ENCODE measurements at regions of chr5 and their contacts with region 1.

Region 1: DNA sequence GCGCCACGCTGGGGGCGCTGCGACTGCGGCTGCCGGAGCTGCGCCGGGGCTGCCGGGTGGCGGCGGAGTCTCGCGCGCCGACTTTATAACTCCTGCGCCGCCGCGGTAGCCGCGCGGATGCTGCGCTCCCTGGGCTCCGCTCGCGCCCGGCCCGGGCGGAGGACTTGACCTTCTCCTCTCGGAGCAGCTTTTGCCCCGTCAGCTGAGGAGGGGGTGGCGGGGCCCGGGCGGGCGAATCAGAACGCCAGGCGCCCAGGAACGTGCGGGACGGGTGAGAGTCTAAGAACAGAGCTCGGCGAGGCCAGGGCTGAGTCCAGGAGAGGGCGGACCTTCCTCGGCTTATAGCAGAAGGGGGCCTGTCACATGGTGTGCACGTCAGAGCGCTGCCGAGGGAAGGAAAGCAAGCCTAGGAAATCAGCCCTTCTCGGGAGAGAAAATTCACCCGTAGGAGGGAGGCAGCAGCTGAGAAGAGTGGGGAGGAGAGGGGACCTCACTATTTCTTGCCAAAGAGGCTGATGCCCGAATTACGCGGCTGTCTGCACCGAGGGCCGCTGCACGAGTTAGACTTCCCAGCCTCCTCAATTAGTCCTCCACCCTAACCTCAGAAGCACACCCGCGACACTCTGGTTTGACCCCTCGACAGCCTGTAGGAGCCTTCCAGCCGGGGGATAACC is at the start of gene FOXD1:
- DNase-seq: peak; percentile 91
- H3K4me3 Mint-ChIP-seq: peak within 1 kb of the TSS; percentile 85
- H3K27ac Mint-ChIP-seq: peak within 1 kb of the TSS; percentile 87
- H3K4me1 Mint-ChIP-seq: peaks cover 11% of the 10 kb centered on the region
- H3K27me3 Mint-ChIP-seq: no peaks in the 10 kb centered on the region
- CTCF ChIP-seq: no peak
- total RNA-seq, gene FOXD1: 46.4 and 50.9 TPM in 2 replicates

Region 2: DNA sequence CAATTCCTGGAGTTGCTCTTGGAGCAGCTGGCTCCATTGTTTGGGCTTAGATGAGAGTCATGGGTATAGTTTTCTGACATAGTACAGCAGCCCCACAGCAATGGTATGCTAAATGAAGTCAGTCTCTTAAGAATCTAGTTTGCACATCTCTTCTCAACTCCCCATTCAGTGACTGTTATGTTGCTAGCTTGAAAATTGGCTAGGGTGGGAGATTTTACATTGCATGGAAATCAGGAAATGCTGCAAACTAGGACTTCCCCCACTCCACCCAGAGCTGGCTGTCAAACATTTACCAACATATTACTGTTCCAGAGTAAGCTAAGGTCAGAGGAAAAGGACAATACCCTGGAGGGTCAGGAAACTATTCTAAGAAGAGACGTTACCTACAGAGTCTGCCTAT is 510.4 kb before region 1 on chr5:
- CTCF ChIA-PET with region 1: no interaction called
- POLR2A ChIA-PET with region 1: no interaction called
- intact Hi-C with region 1: no loop called
- DNase-seq: no peak
- H3K4me3 Mint-ChIP-seq: no peak overlapping the region
- H3K27ac Mint-ChIP-seq: no peak overlapping the region
- H3K4me1 Mint-ChIP-seq: peaks cover 1% of the 10 kb centered on the region
- H3K27me3 Mint-ChIP-seq: no peaks in the 10 kb centered on the region
- CTCF ChIP-seq: no peak

Region 3: GRCh38 chr5:73135429-73136054 is 313.1 kb before region 1 on chr5:
- CTCF ChIA-PET with region 1: interaction called, 6 read pairs
- POLR2A ChIA-PET with region 1: no interaction called
- intact Hi-C with region 1: loop called (anchors 1 kb)
- DNase-seq: peak; percentile 68
- H3K4me3 Mint-ChIP-seq: no peak overlapping the region
- H3K27ac Mint-ChIP-seq: no peak overlapping the region
- H3K4me1 Mint-ChIP-seq: peaks cover 6% of the 10 kb centered on the region
- H3K27me3 Mint-ChIP-seq: no peaks in the 10 kb centered on the region
- CTCF ChIP-seq: peak; percentile 20

Region 4: DNA sequence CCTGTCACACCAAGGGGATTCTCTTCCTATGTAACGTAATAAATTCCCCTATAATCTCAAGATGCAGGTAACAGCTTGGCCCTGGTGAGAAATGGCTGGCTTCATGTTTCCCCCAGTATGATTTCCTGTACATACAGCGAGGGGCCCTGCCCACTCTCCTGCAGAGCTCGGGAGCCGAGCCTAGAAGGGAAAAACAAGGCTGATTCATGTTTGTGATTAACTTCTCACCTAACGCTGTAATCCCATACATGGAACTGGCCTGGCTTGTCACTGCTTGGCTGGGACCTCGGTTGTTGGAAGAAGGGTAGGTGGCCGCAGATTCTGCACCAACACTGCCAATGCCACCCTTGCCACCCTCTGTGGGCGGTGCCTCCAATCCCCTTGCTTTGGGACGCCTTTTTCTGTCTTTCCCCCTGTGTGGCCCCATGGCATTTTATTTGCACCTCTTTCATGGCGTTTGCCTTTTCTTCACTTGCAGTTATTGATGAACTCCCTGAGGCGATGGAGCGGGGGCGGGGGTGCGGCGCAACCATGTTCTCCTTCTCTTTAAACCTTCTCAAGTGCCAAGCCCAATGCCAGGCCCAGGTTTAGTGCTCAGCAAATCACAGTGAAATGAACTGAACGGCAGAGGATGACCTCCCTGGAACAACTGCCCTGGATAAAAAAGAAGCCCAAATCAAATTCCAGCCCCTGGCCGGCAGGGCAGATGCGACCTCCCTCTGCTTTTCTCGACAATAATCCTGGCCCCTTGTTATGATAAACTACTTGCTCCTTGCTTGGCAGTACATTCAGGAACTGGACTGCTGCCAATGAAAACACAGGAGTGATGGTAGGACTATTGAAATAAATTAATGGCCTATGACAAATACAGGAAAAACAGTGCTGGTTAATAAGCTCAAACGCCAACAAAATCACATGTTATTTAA is 167.5 kb before region 1 on chr5:
- CTCF ChIA-PET with region 1: interaction called, 3 read pairs
- POLR2A ChIA-PET with region 1: interaction called, 22 read pairs
- intact Hi-C with region 1: loop called (anchors 5 kb)
- DNase-seq: peak; percentile 96
- H3K4me3 Mint-ChIP-seq: peak overlapping the region; percentile 49
- H3K27ac Mint-ChIP-seq: peak overlapping the region; percentile 72
- H3K4me1 Mint-ChIP-seq: peaks cover 53% of the 10 kb centered on the region
- H3K27me3 Mint-ChIP-seq: no peaks in the 10 kb centered on the region
- CTCF ChIP-seq: no peak

Region 5: DNA sequence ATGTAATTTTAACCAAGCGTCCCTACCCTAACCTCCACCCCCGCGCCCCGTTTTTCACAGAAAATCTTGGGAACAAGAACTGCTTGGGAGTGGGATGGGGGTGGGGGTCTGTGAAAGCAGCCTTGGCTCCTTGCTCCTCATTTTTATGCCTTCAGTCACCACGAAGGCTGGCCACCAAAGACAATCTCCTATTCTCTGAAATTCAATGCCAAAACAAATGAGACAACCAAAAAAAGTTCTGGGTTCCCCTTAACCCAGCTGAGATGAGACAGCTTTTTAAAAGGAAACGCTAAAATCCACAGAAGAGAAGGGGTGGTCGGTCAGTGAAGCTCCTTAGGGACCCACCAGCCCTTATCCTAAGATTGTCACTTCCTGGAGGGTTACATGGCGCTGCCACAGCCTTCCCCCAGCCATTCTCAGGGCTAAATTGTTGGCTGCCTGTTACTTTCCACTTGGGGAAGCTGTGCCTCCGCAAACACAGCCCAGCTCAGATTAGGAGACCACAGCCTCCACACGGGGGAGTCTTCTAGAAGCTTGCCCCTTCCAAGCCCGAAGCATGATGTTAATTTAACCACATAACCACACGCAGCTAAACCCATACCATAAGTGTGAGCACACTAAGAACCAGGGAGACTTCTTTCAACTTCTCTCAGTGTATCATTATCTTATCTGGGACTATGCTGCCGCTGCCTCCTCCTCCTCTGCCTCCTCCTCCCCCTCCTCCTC is 136.3 kb before region 1 on chr5:
- CTCF ChIA-PET with region 1: interaction called, 4 read pairs
- POLR2A ChIA-PET with region 1: interaction called, 4 read pairs
- intact Hi-C with region 1: loop called (anchors 5 kb)
- DNase-seq: no peak
- H3K4me3 Mint-ChIP-seq: no peak overlapping the region
- H3K27ac Mint-ChIP-seq: peak overlapping the region; percentile 75
- H3K4me1 Mint-ChIP-seq: peaks cover 13% of the 10 kb centered on the region
- H3K27me3 Mint-ChIP-seq: no peaks in the 10 kb centered on the region
- CTCF ChIP-seq: no peak

Region 6: DNA sequence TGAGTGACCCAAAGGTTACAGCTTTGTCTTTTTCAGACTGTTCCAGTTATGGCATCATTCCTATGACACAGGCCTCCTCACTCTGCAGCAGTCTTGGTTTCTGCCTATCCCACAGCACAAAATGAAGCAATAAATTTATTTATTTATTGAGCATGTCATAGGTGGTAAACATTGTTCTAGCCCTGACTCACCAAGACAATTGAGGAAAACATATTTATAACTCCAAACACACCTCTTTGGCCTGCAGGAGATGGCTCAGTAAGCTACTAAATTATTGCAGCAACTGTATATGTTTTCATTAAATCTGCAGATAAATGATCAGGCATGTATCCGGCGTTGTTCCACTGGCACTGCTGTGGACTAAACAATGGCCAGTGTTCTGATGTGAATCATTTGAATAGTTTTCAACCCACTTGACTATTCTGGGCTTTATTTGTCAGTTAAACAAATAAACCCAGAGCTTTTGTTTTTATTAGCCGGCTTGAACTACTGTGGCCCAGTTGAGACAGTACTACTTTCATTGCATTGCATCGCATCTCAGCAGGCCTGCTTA is 83.2 kb before region 1 on chr5:
- CTCF ChIA-PET with region 1: interaction called, 6 read pairs
- POLR2A ChIA-PET with region 1: interaction called, 35 read pairs
- intact Hi-C with region 1: loop called (anchors 2 kb)
- DNase-seq: peak; percentile 69
- H3K4me3 Mint-ChIP-seq: no peak overlapping the region
- H3K27ac Mint-ChIP-seq: peak overlapping the region; percentile 71
- H3K4me1 Mint-ChIP-seq: peaks cover 33% of the 10 kb centered on the region
- H3K27me3 Mint-ChIP-seq: no peaks in the 10 kb centered on the region
- CTCF ChIP-seq: no peak

Region 7: GRCh38 chr5:73638344-73639095 is 189.9 kb after region 1 on chr5:
- CTCF ChIA-PET with region 1: no interaction called
- POLR2A ChIA-PET with region 1: no interaction called
- intact Hi-C with region 1: no loop called
- DNase-seq: peak; percentile 52
- H3K4me3 Mint-ChIP-seq: peak overlapping the region; percentile 33
- H3K27ac Mint-ChIP-seq: peak overlapping the region; percentile 87
- H3K4me1 Mint-ChIP-seq: peaks cover 45% of the 10 kb centered on the region
- H3K27me3 Mint-ChIP-seq: no peaks in the 10 kb centered on the region
- CTCF ChIP-seq: no peak